Activated B cell treated with CpG ODN at 0.5 μM for 24 hours (primary cell): ENCODE measurements at regions of chr10 and their contacts with region 1.

Region 1: GRCh38 chr10:79242620-79243152 is 104.6 kb upstream of the PPIF start:
- DNase-seq: peak; percentile 71
- ATAC-seq: peak; percentile 52
- H3K4me3 Mint-ChIP-seq: peak overlapping the region; percentile 84
- H3K27ac Mint-ChIP-seq: peak overlapping the region; percentile 50
- H3K4me1 Mint-ChIP-seq: peaks cover 57% of the 10 kb centered on the region
- H3K27me3 Mint-ChIP-seq: no peaks in the 10 kb centered on the region
- CTCF ChIP-seq: no peak

Region 2: DNA sequence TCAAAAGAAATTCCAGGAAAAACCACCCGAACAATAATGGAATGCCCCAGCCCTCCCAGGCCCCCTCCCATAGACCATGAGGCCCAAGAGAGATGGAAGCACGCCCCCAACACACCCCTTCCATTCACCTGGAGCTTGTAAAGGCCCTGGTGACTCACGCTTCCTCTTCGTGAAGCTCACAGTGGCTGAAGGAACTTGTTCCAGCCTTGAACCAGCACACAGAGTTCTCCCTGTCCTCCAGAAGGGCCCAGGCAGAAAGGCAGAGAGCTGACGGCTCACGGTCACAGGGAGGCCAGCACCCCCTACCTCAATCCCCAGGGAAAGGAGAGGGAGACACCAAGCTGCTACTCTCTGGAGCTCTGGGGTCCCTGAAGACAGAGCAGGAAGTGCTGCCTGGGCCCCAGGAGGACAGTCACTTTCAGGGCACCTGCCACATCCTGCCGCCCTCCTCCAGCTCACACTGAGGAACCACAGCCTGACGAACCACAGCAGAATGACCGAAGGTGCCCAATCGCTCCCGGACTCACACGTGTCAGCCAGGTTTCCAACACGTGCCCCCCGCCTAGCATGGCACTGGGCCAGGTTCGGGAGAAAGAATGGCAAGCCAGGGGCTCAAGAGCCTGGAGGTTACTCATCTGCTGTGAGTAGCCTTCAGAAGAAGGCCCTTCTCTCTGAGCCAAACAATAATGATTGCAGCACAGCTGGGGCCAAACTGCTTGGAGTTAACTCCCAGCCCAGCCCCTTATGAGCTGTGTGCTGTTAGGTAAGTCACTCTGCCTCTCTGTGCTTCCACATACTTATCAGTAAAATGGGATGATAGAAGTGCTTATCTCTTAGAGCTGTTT is 1368.9 kb before region 1 on chr10:
- CTCF ChIA-PET with region 1: no interaction called
- POLR2A ChIA-PET with region 1: no interaction called
- intact Hi-C with region 1: loop called (anchors 10 kb)
- DNase-seq: peak; percentile 46
- ATAC-seq: peak; percentile 79
- H3K4me3 Mint-ChIP-seq: peak overlapping the region; percentile 49
- H3K27ac Mint-ChIP-seq: peak overlapping the region; percentile 82
- H3K4me1 Mint-ChIP-seq: peaks cover 38% of the 10 kb centered on the region
- H3K27me3 Mint-ChIP-seq: no peaks in the 10 kb centered on the region
- CTCF ChIP-seq: no peak

Region 3: GRCh38 chr10:79255007-79255507 is 12.4 kb after region 1 on chr10:
- CTCF ChIA-PET with region 1: interaction called, 3 read pairs
- POLR2A ChIA-PET with region 1: interaction called, 311 read pairs
- intact Hi-C with region 1: loop called (anchors 1 kb)
- DNase-seq: no peak
- ATAC-seq: peak; percentile 51
- H3K4me3 Mint-ChIP-seq: peak overlapping the region; percentile 45
- H3K27ac Mint-ChIP-seq: peak overlapping the region; percentile 74
- H3K4me1 Mint-ChIP-seq: peaks cover 85% of the 10 kb centered on the region
- H3K27me3 Mint-ChIP-seq: no peaks in the 10 kb centered on the region
- CTCF ChIP-seq: no peak

Region 4: DNA sequence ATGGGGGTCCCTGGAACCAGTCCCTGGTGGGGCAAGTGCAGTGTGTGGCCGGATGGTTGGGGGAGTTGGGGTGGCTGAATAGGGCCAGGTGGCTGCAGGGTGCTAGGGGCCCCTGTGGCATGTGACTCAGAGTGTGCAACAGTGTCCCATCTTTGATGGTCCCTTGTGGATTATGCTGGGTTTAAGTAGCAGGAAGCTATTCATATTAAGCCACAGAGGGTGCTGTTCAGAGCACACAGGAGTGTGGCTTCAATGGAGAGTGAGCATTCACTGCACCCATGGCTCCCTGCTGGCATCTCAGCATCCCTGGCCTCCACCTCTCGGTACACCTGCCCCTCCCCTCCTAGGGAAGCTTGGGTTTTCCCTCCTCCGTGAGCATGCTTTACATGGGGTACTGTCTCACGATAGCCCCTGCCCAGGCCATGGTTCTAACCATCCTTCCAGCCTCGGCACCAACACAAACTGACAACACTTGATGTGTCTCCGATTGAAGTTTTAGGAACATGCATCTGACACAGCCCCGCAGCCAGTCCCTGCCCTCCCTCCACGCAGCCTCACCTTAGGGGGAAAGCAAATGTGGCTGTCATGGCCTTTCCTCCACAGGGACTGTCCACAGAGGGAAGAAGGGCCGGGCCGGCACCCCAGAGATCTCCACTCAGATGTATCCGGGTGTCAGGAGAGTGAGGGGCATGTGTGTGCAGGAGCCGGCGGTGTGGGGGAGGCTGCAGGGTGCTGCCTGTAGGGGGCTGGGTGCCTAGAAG is 74.2 kb after region 1 on chr10:
- CTCF ChIA-PET with region 1: no interaction called
- POLR2A ChIA-PET with region 1: interaction called, 32 read pairs
- intact Hi-C with region 1: no loop called
- DNase-seq: peak; percentile 39
- ATAC-seq: peak; percentile 89
- H3K4me3 Mint-ChIP-seq: peak overlapping the region; percentile 48
- H3K27ac Mint-ChIP-seq: peak overlapping the region; percentile 56
- H3K4me1 Mint-ChIP-seq: peaks cover 43% of the 10 kb centered on the region
- H3K27me3 Mint-ChIP-seq: no peaks in the 10 kb centered on the region
- CTCF ChIP-seq: no peak

Region 5: DNA sequence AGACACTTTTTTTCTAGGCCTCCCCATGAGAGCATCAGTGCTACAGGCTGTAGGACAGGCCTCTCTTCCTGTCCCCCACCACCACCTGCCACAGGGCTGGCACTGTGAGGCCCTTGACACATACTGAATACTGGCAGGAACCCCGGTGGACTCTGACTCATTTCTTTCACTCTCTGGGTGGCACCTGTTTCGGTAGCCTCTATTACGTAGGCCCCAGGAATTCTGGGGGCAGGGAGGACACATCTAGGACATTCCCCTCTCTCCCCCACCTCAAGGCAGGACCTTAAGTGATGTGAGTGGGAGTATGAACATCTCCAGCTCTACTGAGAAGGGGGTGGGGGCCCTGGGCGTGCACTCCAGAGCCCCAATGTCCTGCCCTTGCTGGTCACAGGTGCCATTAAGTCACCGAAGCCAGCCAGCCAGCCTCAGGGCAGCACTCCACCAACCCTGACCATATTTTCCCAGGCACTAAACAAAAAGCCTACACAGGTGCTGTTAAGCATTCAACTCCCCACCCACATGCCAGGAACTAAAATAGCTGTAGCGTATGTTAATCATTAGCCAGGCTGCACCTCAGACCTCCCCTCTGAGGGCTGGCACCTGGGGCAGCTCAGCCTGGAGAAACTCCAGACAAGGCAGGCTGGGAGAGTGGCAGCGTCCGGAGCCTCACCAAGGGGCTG is 953.7 kb after region 1 on chr10:
- CTCF ChIA-PET with region 1: no interaction called
- POLR2A ChIA-PET with region 1: no interaction called
- intact Hi-C with region 1: loop called (anchors 5 kb)
- DNase-seq: peak; percentile 48
- ATAC-seq: peak; percentile 92
- H3K4me3 Mint-ChIP-seq: peak overlapping the region; percentile 67
- H3K27ac Mint-ChIP-seq: peak overlapping the region; percentile 94
- H3K4me1 Mint-ChIP-seq: peaks cover 88% of the 10 kb centered on the region
- H3K27me3 Mint-ChIP-seq: no peaks in the 10 kb centered on the region
- CTCF ChIP-seq: no peak